ENCODE measurements at regions of chr1 and their contacts with region 1.

Region 1: DNA sequence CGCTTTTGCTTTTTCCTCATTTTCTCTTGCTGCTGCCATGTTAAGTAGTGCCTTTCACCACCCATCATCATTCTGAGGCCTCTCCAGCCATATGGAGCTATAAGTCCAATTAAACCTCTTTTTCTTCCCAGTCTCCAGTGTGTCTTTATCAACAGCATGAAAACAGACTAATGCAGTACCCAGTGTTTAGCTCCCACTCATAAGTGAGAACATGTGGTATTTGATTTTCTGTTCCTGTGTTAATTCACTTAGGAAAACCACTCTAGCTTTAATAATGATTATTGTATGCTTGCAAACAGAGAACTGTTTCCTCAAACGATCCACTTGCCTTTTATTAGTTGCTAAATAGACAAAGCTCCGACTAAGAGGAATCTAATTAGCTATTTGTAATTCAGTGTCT is 43.3 kb downstream of the IL23R start:
- DNase-seq: no peak
- ATAC-seq: no peak
- H3K4me3 ChIP-seq: no peak overlapping the region
- H3K27ac ChIP-seq: no peak overlapping the region
- H3K4me1 ChIP-seq: peaks cover 0 to 3% (median 0%) of the 10 kb centered on the region in 9 donors
- H3K27me3 ChIP-seq: no peaks in the 10 kb centered on the region
- CTCF ChIP-seq: no peak

Region 2: GRCh38 chr1:66996018-66996682 is 213.4 kb before region 1 on chr1:
- intact Hi-C with region 1: loop called in 1 of 10 experiments (anchors 5 kb)
- DNase-seq: peak in 1 of 2 donors; percentile 66
- ATAC-seq: peak; percentile 39 to 77 (median 70)
- H3K4me3 ChIP-seq: no peak overlapping the region
- H3K27ac ChIP-seq: no peak overlapping the region
- H3K4me1 ChIP-seq: peaks cover 0 to 7% (median 2%) of the 10 kb centered on the region in 9 donors
- H3K27me3 ChIP-seq: no peaks in the 10 kb centered on the region
- CTCF ChIP-seq: peak in 8 of 9 donors; percentile 34 to 83 (median 76)

Region 3: GRCh38 chr1:67314696-67315095 is 105.2 kb after region 1 on chr1:
- intact Hi-C with region 1: no loop called
- DNase-seq: no peak
- ATAC-seq: no peak
- H3K4me3 ChIP-seq: no peak overlapping the region
- H3K27ac ChIP-seq: no peak overlapping the region
- H3K4me1 ChIP-seq: peaks cover 0 to 15% (median 0%) of the 10 kb centered on the region in 9 donors
- H3K27me3 ChIP-seq: peaks cover 0 to 6% (median 0%) of the 10 kb centered on the region in 7 donors
- CTCF ChIP-seq: no peak

Region 4: GRCh38 chr1:67970088-67970487 is 760.6 kb after region 1 on chr1:
- intact Hi-C with region 1: no loop called
- DNase-seq: no peak
- ATAC-seq: no peak
- H3K4me3 ChIP-seq: no peak overlapping the region
- H3K27ac ChIP-seq: no peak overlapping the region
- H3K4me1 ChIP-seq: no peaks in the 10 kb centered on the region
- H3K27me3 ChIP-seq: no peaks in the 10 kb centered on the region
- CTCF ChIP-seq: no peak